ENCODE measurements at regions of chr6 and their contacts with region 1.

Region 1: DNA sequence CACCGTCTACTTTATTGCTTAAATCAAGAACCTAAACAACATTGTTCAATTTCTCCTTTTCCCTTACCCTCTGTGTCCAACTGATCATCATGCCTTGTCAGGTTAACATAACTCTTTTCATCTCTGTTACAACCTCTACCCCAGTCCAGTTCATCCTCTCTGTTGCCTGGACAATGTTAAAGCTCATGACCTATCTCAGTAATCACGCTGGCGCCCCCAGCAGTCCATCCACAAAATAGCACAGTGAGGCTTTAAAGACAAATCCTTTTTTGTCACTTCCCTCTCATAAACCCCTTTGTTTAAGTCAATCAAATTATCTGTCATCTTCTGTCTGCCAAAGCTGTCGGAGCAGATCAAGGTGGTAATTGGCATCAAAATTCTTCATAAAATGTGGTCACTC is 140.1 kb downstream of the QKI start:
- DNase-seq: peak; percentile 61
- H3K4me3 ChIP-seq: no peak overlapping the region
- H3K27ac ChIP-seq: no peak overlapping the region
- H3K4me1 ChIP-seq: no peaks in the 10 kb centered on the region
- H3K27me3 ChIP-seq: no peaks in the 10 kb centered on the region
- CTCF ChIP-seq: peak; percentile 64 to 72
- POLR2A ChIP-seq: no peak

Region 2: DNA sequence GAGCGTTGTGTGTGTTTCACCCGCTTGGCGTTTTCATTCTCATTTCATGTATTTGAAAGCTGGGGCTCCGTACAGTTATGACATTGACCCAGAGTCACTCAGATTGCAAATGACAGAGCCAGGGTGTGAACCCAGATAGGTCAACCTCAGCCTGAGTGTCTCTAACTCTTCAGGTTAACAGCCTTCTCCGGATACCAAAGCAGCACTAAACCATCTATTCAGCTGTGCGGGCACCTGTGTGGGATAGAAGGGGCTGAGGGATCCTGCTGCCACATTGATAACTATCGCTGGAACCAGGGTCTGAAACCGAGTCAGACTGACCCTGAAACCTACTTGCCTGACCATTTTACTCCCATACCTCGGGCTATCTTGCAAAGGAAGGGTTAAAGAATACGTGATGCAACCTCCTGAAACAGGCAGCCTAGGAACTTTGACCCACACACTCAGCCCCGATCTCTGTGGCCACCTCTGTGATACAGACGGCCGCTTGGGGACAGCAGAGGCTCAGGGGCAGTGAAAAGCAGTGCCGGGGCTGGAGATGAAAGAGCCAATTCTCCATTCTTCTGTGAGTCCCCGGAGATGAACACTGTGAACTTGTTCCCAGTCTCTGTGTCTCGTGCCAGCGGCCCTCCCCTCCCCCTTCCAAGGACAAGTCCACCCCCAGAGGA is 373.7 kb before region 1 on chr6:
- CTCF ChIA-PET with region 1: interaction called, 10 read pairs
- POLR2A ChIA-PET with region 1: no interaction called
- dilution Hi-C with region 1: no loop called
- intact Hi-C with region 1: loop called (anchors 1 kb)
- DNase-seq: peak; percentile 71
- H3K4me3 ChIP-seq: no peak overlapping the region
- H3K27ac ChIP-seq: no peak overlapping the region
- H3K4me1 ChIP-seq: no peaks in the 10 kb centered on the region
- H3K27me3 ChIP-seq: peaks cover 4 to 9% of the 10 kb centered on the region in 2 experiments
- CTCF ChIP-seq: peak; percentile 93 to 97
- POLR2A ChIP-seq: no peak

Region 3: DNA sequence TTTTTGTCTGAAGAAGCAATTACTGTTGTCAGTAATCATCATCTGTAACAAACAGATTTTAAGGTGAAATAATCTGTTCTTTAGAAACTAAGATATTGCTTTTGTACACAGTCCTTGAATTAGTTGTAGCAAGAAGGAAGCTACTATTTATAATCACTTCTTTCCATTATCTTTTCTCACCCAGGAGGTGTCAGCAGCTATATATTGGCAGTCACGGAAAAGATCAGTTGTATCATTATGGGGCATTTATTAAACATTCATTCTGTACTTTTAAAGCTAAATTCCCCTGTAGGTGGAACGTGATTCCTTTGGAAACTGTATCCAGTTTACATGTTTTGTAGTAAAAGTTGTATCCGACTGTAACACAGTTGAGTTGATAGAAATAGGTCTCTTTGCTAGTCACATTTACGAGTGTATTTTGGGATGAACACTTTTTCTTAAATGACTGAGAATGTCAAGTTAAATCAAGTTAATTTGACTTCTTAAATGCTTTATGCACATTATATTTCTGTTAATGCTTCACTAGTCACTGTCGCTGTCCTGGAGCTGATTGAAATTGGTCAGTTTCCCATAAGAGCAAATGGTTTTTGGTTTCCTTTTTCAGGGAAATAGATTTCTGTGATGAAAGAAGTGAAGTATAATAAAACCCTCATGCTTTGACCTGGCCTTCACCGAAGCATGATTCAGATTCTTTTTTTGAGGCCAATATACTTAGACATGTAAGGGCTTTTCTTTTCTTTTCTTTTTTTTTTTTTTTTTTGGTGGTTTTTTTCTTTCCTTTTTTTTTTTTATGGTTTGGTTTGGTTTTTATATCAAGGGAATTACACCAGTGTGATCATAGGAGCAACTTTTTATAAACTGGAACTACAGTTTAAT is 135.0 kb before region 1 on chr6:
- CTCF ChIA-PET with region 1: interaction called, 17 read pairs
- POLR2A ChIA-PET with region 1: no interaction called
- dilution Hi-C with region 1: no loop called
- intact Hi-C with region 1: loop called (anchors 1 kb)
- DNase-seq: peak; percentile 66
- H3K4me3 ChIP-seq: peak overlapping the region in 1 of 3 experiments; percentile 94
- H3K27ac ChIP-seq: peak overlapping the region; percentile 11
- H3K4me1 ChIP-seq: peaks cover 30% of the 10 kb centered on the region
- H3K27me3 ChIP-seq: no peaks in the 10 kb centered on the region
- CTCF ChIP-seq: no peak
- POLR2A ChIP-seq: no peak

Region 4: GRCh38 chr6:163427498-163428254 is 127.0 kb before region 1 on chr6:
- CTCF ChIA-PET with region 1: interaction called, 21 read pairs
- POLR2A ChIA-PET with region 1: no interaction called
- dilution Hi-C with region 1: no loop called
- intact Hi-C with region 1: loop called (anchors 1 kb)
- DNase-seq: peak; percentile 87
- H3K4me3 ChIP-seq: no peak overlapping the region
- H3K27ac ChIP-seq: no peak overlapping the region
- H3K4me1 ChIP-seq: peaks cover 32% of the 10 kb centered on the region
- H3K27me3 ChIP-seq: no peaks in the 10 kb centered on the region
- CTCF ChIP-seq: peak in 1 of 2 donors; percentile 7
- POLR2A ChIP-seq: no peak